ENCODE measurements at regions of chr1 and their contacts with region 1.

Region 1: GRCh38 chr1:221543529-221544120 is 198.3 kb downstream of the DUSP10 start:
- DNase-seq: peak in 1 of 9 donors; percentile 4
- ATAC-seq: no peak
- H3K4me3 ChIP-seq: no peak overlapping the region
- H3K4me3 Mint-ChIP-seq: no peak overlapping the region
- H3K27ac ChIP-seq: no peak overlapping the region
- H3K27ac Mint-ChIP-seq: peak overlapping the region in 1 of 9 donors; percentile 21
- H3K4me1 ChIP-seq: no peaks in the 10 kb centered on the region
- H3K4me1 Mint-ChIP-seq: peaks cover 0 to 3% (median 0%) of the 10 kb centered on the region in 7 donors
- H3K27me3 ChIP-seq: no peaks in the 10 kb centered on the region
- H3K27me3 Mint-ChIP-seq: peaks cover 5 to 27% (median 13%) of the 10 kb centered on the region in 5 donors

Region 2: GRCh38 chr1:221839321-221839720 is 295.7 kb after region 1 on chr1:
- CTCF ChIA-PET with region 1: no interaction called
- POLR2A ChIA-PET with region 1: no interaction called
- intact Hi-C with region 1: no loop called
- DNase-seq: no peak
- ATAC-seq: no peak
- H3K4me3 ChIP-seq: no peak overlapping the region
- H3K4me3 Mint-ChIP-seq: no peak overlapping the region
- H3K27ac ChIP-seq: no peak overlapping the region
- H3K27ac Mint-ChIP-seq: peak overlapping the region in 3 of 9 donors; percentile 31 to 53 (median 38)
- H3K4me1 ChIP-seq: peaks cover 0 to 17% of the 10 kb centered on the region in 2 donors
- H3K4me1 Mint-ChIP-seq: peaks cover 9 to 62% (median 13%) of the 10 kb centered on the region in 7 donors
- H3K27me3 ChIP-seq: no peaks in the 10 kb centered on the region
- H3K27me3 Mint-ChIP-seq: peaks cover 0 to 9% (median 4%) of the 10 kb centered on the region in 5 donors

Region 3: GRCh38 chr1:222171005-222171404 is 627.4 kb after region 1 on chr1:
- CTCF ChIA-PET with region 1: no interaction called
- POLR2A ChIA-PET with region 1: no interaction called
- intact Hi-C with region 1: loop called in 1 of 2 experiments (anchors 10 kb)
- DNase-seq: no peak
- ATAC-seq: peak; percentile 46
- H3K4me3 ChIP-seq: no peak overlapping the region
- H3K4me3 Mint-ChIP-seq: no peak overlapping the region
- H3K27ac ChIP-seq: no peak overlapping the region
- H3K27ac Mint-ChIP-seq: no peak overlapping the region
- H3K4me1 ChIP-seq: no peaks in the 10 kb centered on the region
- H3K4me1 Mint-ChIP-seq: peaks cover 0 to 2% (median 0%) of the 10 kb centered on the region in 7 donors
- H3K27me3 ChIP-seq: no peaks in the 10 kb centered on the region
- H3K27me3 Mint-ChIP-seq: peaks cover 0 to 6% (median under 1%) of the 10 kb centered on the region in 5 donors